CD4-positive, alpha-beta memory T cell (primary cell): ENCODE measurements at regions of chr6 and their contacts with region 1.

Region 1: GRCh38 chr6:130872250-130873095 is 45.3 kb downstream of the SMLR1 start:
- DNase-seq: peak; percentile 43 to 59 (median 58)
- H3K4me3 ChIP-seq: no peak overlapping the region
- H3K4me3 Mint-ChIP-seq: no peak overlapping the region
- H3K27ac ChIP-seq: no peak overlapping the region
- H3K27ac Mint-ChIP-seq: peak overlapping the region in 1 of 7 donors; percentile 76
- H3K4me1 ChIP-seq: no peaks in the 10 kb centered on the region
- H3K4me1 Mint-ChIP-seq: peaks cover 0 to 7% (median 3%) of the 10 kb centered on the region in 4 donors
- H3K27me3 ChIP-seq: no peaks in the 10 kb centered on the region
- H3K27me3 Mint-ChIP-seq: peaks cover 0 to 1% of the 10 kb centered on the region in 2 donors

Region 2: GRCh38 chr6:130293800-130294199 is 578.7 kb before region 1 on chr6:
- CTCF ChIA-PET with region 1: interaction called, 10 read pairs
- POLR2A ChIA-PET with region 1: no interaction called
- intact Hi-C with region 1: loop called (anchors 1 kb)
- DNase-seq: peak in 4 of 5 donors; percentile 35 to 45 (median 38)
- H3K4me3 ChIP-seq: no peak overlapping the region
- H3K4me3 Mint-ChIP-seq: no peak overlapping the region
- H3K27ac ChIP-seq: no peak overlapping the region
- H3K27ac Mint-ChIP-seq: no peak overlapping the region
- H3K4me1 ChIP-seq: no peaks in the 10 kb centered on the region
- H3K4me1 Mint-ChIP-seq: peaks cover 0 to 3% (median 0%) of the 10 kb centered on the region in 4 donors
- H3K27me3 ChIP-seq: no peaks in the 10 kb centered on the region
- H3K27me3 Mint-ChIP-seq: no peaks in the 10 kb centered on the region

Region 3: GRCh38 chr6:130625825-130626527 is 246.5 kb before region 1 on chr6:
- CTCF ChIA-PET with region 1: no interaction called
- POLR2A ChIA-PET with region 1: no interaction called
- intact Hi-C with region 1: no loop called
- DNase-seq: no peak
- H3K4me3 ChIP-seq: no peak overlapping the region
- H3K4me3 Mint-ChIP-seq: no peak overlapping the region
- H3K27ac ChIP-seq: no peak overlapping the region
- H3K27ac Mint-ChIP-seq: no peak overlapping the region
- H3K4me1 ChIP-seq: no peaks in the 10 kb centered on the region
- H3K4me1 Mint-ChIP-seq: peaks cover 0 to 4% (median 3%) of the 10 kb centered on the region in 4 donors
- H3K27me3 ChIP-seq: no peaks in the 10 kb centered on the region
- H3K27me3 Mint-ChIP-seq: no peaks in the 10 kb centered on the region

Region 4: GRCh38 chr6:130796313-130796905 is 76.1 kb before region 1 on chr6:
- CTCF ChIA-PET with region 1: no interaction called
- POLR2A ChIA-PET with region 1: no interaction called
- intact Hi-C with region 1: no loop called
- DNase-seq: no peak
- H3K4me3 ChIP-seq: no peak overlapping the region
- H3K4me3 Mint-ChIP-seq: no peak overlapping the region
- H3K27ac ChIP-seq: no peak overlapping the region
- H3K27ac Mint-ChIP-seq: no peak overlapping the region
- H3K4me1 ChIP-seq: no peaks in the 10 kb centered on the region
- H3K4me1 Mint-ChIP-seq: no peaks in the 10 kb centered on the region
- H3K27me3 ChIP-seq: no peaks in the 10 kb centered on the region
- H3K27me3 Mint-ChIP-seq: peaks cover 0 to 1% of the 10 kb centered on the region in 2 donors

Region 5: GRCh38 chr6:130893277-130893676 is 20.8 kb after region 1 on chr6:
- CTCF ChIA-PET with region 1: no interaction called
- POLR2A ChIA-PET with region 1: no interaction called
- intact Hi-C with region 1: no loop called
- DNase-seq: no peak
- H3K4me3 ChIP-seq: no peak overlapping the region
- H3K4me3 Mint-ChIP-seq: no peak overlapping the region
- H3K27ac ChIP-seq: no peak overlapping the region
- H3K27ac Mint-ChIP-seq: peak overlapping the region in 2 of 7 donors; percentile 16 to 61
- H3K4me1 ChIP-seq: no peaks in the 10 kb centered on the region
- H3K4me1 Mint-ChIP-seq: no peaks in the 10 kb centered on the region
- H3K27me3 ChIP-seq: no peaks in the 10 kb centered on the region
- H3K27me3 Mint-ChIP-seq: no peaks in the 10 kb centered on the region